Naive thymus-derived CD4-positive, alpha-beta T cell (primary cell): ENCODE measurements at regions of chr11 and their contacts with region 1.

Region 1: DNA sequence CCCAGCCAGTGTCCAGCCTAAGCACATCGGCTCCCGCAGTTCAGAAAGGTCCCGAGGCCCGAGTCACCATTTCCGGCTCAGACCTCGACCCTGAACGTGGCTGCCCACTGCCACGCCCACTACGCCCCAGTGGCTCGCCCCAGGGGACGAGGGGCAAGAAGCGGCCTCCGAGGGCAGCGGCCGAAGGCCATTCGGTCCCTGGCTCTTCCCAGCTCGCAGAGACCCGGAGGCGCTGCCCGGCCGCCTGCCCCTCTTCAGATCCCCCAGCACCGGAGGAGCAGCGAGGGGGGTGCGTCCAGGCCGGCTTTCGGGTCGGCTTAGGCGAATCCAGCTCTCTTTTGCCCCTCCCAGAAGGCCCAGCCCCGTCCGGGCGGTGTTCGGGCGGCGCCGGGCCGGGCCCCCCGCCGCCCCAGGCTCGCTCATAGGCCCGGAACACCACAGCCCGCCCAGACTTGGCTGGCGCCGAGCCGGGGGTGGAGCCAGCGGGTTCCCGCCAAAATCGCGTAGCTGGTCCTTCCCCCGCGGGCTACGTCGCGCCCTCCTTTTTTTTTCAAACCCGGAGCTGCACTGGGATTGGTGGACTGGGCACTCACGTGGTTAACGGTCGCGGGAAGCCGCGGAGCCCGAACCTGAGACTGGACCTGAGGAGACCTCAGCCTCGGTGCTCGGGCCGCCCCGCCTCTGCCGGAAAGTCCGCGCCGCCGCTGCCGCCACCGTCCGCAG is at the start of gene WEE1:
- DNase-seq: peak; percentile 84 to 99 (median 88)
- ATAC-seq: peak; percentile 95
- H3K4me3 ChIP-seq: peak within 1 kb of the TSS; percentile 78
- H3K4me3 Mint-ChIP-seq: peak within 1 kb of the TSS; percentile 74 to 94 (median 85)
- H3K27ac ChIP-seq: peak within 1 kb of the TSS; percentile 73
- H3K27ac Mint-ChIP-seq: peak within 1 kb of the TSS in 7 of 9 donors; percentile 43 to 91 (median 59)
- H3K4me1 ChIP-seq: peaks cover 9 to 11% of the 10 kb centered on the region in 2 donors
- H3K4me1 Mint-ChIP-seq: peaks cover 0 to 43% (median 19%) of the 10 kb centered on the region in 7 donors
- H3K27me3 ChIP-seq: peaks cover 0 to 3% of the 10 kb centered on the region in 2 donors
- H3K27me3 Mint-ChIP-seq: peaks cover 3 to 22% (median 11%) of the 10 kb centered on the region in 5 donors
- total RNA-seq, gene WEE1: 0.43 to 47.6 (median 1.9) TPM

Region 2: GRCh38 chr11:8682303-8683114 is 890.7 kb before region 1 on chr11 and contains the starts of genes RPL27A and TRIM66:
- CTCF ChIA-PET with region 1: no interaction called
- POLR2A ChIA-PET with region 1: no interaction called
- intact Hi-C with region 1: loop called (anchors 2 to 5 kb)
- DNase-seq: peak; percentile 97 to 100 (median 99)
- ATAC-seq: peak; percentile 98
- H3K4me3 ChIP-seq: peak within 1 kb of the TSS; percentile 73
- H3K4me3 Mint-ChIP-seq: peak within 1 kb of the TSS; percentile 89 to 97 (median 96)
- H3K27ac ChIP-seq: peak within 1 kb of the TSS; percentile 99
- H3K27ac Mint-ChIP-seq: peak within 1 kb of the TSS; percentile 97 to 99 (median 98)
- H3K4me1 ChIP-seq: peaks cover 17% of the 10 kb centered on the region in 2 donors
- H3K4me1 Mint-ChIP-seq: peaks cover 30 to 57% (median 43%) of the 10 kb centered on the region in 7 donors
- H3K27me3 ChIP-seq: no peaks in the 10 kb centered on the region
- H3K27me3 Mint-ChIP-seq: no peaks in the 10 kb centered on the region
- total RNA-seq, gene RPL27A: 758 to 2,116 (median 1,670) TPM
- total RNA-seq, gene TRIM66: 16.0 to 37.6 (median 24.2) TPM

Region 3: GRCh38 chr11:9384535-9385303 is 188.5 kb before region 1 on chr11 and contains the start of gene IPO7:
- CTCF ChIA-PET with region 1: no interaction called
- POLR2A ChIA-PET with region 1: no interaction called
- intact Hi-C with region 1: loop called in 1 of 2 experiments (anchors 2 kb)
- DNase-seq: peak; percentile 68 to 88 (median 84)
- ATAC-seq: peak; percentile 99
- H3K4me3 ChIP-seq: peak within 1 kb of the TSS; percentile 78
- H3K4me3 Mint-ChIP-seq: peak within 1 kb of the TSS; percentile 89 to 98 (median 94)
- H3K27ac ChIP-seq: peak within 1 kb of the TSS; percentile 88
- H3K27ac Mint-ChIP-seq: peak within 1 kb of the TSS; percentile 79 to 94 (median 91)
- H3K4me1 ChIP-seq: peaks cover 11 to 15% of the 10 kb centered on the region in 2 donors
- H3K4me1 Mint-ChIP-seq: peaks cover 25 to 51% (median 38%) of the 10 kb centered on the region in 7 donors
- H3K27me3 ChIP-seq: no peaks in the 10 kb centered on the region
- H3K27me3 Mint-ChIP-seq: no peaks in the 10 kb centered on the region
- total RNA-seq, gene IPO7: 47.3 to 105 (median 61.3) TPM

Region 4: DNA sequence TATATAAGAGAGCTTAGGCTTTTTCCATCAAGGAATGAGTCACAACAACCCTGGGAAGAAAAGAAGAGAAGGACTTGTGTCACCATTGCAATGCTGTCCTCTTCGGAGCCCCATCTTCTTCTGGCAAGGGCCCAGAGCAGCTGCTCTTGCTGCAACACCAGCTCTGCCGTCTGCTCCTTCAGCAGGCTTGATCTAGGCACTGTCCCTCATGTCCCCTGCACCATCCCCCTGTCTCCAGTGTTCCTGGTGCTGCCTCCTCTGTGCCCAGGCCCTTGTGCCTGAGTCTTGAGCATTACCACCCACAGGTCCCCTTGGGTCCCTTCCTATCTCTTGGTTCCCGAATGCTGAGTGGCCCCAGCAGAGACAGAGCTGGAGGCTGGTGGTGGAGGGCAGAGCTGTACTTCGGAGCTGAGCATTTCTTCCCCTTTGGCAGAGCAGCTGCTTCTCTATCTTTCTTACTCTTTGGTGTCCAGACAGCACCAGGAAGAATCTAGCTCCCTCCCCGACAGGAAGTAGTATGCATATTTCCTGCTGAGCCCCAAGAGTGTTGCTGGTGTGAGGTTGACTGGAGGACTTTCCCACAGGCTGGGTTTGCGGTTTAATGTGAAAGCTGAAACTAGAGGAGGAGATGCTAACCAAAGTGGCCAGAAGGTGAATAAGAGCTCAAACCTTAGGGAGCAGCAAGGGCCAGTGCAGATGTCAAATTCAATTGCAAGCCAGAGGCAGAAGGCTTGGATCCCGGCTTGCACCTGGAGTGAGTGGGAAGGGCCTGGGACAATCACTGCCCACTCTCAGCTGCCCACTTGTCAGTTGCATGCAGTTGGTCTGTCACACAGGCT is 28.0 kb after region 1 on chr11:
- CTCF ChIA-PET with region 1: interaction called, 3 read pairs
- POLR2A ChIA-PET with region 1: interaction called, 7 read pairs
- intact Hi-C with region 1: loop called in 1 of 2 experiments (anchors 1 kb)
- DNase-seq: peak in 8 of 9 donors; percentile 8 to 72 (median 28)
- ATAC-seq: peak; percentile 89
- H3K4me3 ChIP-seq: peak overlapping the region; percentile 30
- H3K4me3 Mint-ChIP-seq: peak overlapping the region; percentile 53 to 87 (median 72)
- H3K27ac ChIP-seq: peak overlapping the region; percentile 63
- H3K27ac Mint-ChIP-seq: peak overlapping the region; percentile 71 to 92 (median 87)
- H3K4me1 ChIP-seq: peaks cover 16 to 18% of the 10 kb centered on the region in 2 donors
- H3K4me1 Mint-ChIP-seq: peaks cover 15 to 33% (median 20%) of the 10 kb centered on the region in 7 donors
- H3K27me3 ChIP-seq: no peaks in the 10 kb centered on the region
- H3K27me3 Mint-ChIP-seq: no peaks in the 10 kb centered on the region

Region 5: GRCh38 chr11:9748361-9748970 is 175.3 kb after region 1 on chr11:
- CTCF ChIA-PET with region 1: interaction called, 3 read pairs
- POLR2A ChIA-PET with region 1: interaction called, 4 read pairs
- intact Hi-C with region 1: loop called (anchors 2 kb)
- DNase-seq: peak in 8 of 9 donors; percentile 41 to 68 (median 60)
- ATAC-seq: peak; percentile 98
- H3K4me3 ChIP-seq: no peak overlapping the region
- H3K4me3 Mint-ChIP-seq: no peak overlapping the region
- H3K27ac ChIP-seq: no peak overlapping the region
- H3K27ac Mint-ChIP-seq: peak overlapping the region in 2 of 9 donors; percentile 28 to 46
- H3K4me1 ChIP-seq: no peaks in the 10 kb centered on the region
- H3K4me1 Mint-ChIP-seq: peaks cover 0 to 18% (median 0%) of the 10 kb centered on the region in 7 donors
- H3K27me3 ChIP-seq: no peaks in the 10 kb centered on the region
- H3K27me3 Mint-ChIP-seq: peaks cover 0 to 4% (median 0%) of the 10 kb centered on the region in 5 donors

Region 6: DNA sequence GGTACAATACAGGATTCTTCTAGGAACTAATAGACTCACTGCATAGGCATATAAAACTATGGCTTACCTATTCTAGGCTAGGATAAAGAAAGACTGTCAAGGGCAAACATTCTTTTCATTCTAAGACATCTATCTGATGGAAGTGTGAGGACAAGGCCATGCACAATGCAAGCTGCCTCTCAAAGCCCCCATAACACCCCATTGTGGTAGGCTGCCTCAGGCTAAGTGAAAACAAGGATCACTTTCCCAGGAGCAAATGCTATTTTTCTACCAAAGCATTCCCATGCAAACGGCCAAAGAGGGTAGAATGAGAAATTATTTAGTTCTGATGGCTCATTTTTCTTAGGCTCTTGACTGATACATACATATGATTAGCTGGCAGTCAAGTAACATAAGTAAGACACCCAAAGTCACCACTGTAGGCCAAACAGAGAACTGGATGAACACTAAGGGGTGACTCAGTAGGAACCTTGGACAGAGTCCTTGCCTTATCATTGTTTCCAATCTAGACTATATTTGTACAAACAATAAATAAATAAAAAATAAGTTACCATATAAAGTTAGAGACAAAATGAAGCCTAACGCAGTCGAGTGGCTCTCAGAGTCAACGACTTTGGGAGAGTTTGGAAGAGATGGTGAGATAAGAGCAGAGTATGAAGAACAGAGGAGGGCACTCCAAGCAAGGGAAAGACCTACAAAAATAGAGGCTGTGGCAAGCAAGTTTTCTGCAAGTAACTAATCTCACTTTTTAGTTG is 417.2 kb after region 1 on chr11:
- CTCF ChIA-PET with region 1: no interaction called
- POLR2A ChIA-PET with region 1: no interaction called
- intact Hi-C with region 1: no loop called
- DNase-seq: no peak
- ATAC-seq: no peak
- H3K4me3 ChIP-seq: no peak overlapping the region
- H3K4me3 Mint-ChIP-seq: no peak overlapping the region
- H3K27ac ChIP-seq: no peak overlapping the region
- H3K27ac Mint-ChIP-seq: no peak overlapping the region
- H3K4me1 ChIP-seq: no peaks in the 10 kb centered on the region
- H3K4me1 Mint-ChIP-seq: peaks cover 0 to 6% (median 0%) of the 10 kb centered on the region in 7 donors
- H3K27me3 ChIP-seq: no peaks in the 10 kb centered on the region
- H3K27me3 Mint-ChIP-seq: no peaks in the 10 kb centered on the region

Region 7: GRCh38 chr11:10750838-10751580 is 1177.8 kb after region 1 on chr11 and contains the start of gene CTR9:
- CTCF ChIA-PET with region 1: no interaction called
- POLR2A ChIA-PET with region 1: no interaction called
- intact Hi-C with region 1: loop called in 1 of 2 experiments (anchors 1 kb)
- DNase-seq: peak; percentile 78 to 94 (median 88)
- ATAC-seq: peak; percentile 96
- H3K4me3 ChIP-seq: peak within 1 kb of the TSS; percentile 79
- H3K4me3 Mint-ChIP-seq: peak within 1 kb of the TSS; percentile 95 to 99 (median 97)
- H3K27ac ChIP-seq: peak within 1 kb of the TSS; percentile 85
- H3K27ac Mint-ChIP-seq: peak within 1 kb of the TSS; percentile 90 to 96 (median 91)
- H3K4me1 ChIP-seq: peaks cover 7 to 8% of the 10 kb centered on the region in 2 donors
- H3K4me1 Mint-ChIP-seq: peaks cover 12 to 36% (median 31%) of the 10 kb centered on the region in 7 donors
- H3K27me3 ChIP-seq: no peaks in the 10 kb centered on the region
- H3K27me3 Mint-ChIP-seq: no peaks in the 10 kb centered on the region
- total RNA-seq, gene CTR9: 23.8 to 64.0 (median 47.8) TPM